ENCODE measurements at regions of chr14 and their contacts with region 1.

Region 1: GRCh38 chr14:89178802-89179535 is 238.1 kb downstream of the FOXN3 start:
- DNase-seq: no peak
- ATAC-seq: no peak
- H3K4me3 ChIP-seq: no peak overlapping the region
- H3K4me3 Mint-ChIP-seq: no peak overlapping the region
- H3K27ac ChIP-seq: no peak overlapping the region
- H3K27ac Mint-ChIP-seq: peak overlapping the region in 6 of 9 donors; percentile 10 to 66 (median 26)
- H3K4me1 ChIP-seq: peaks cover 0 to 4% of the 10 kb centered on the region in 2 donors
- H3K4me1 Mint-ChIP-seq: peaks cover 5 to 44% (median 29%) of the 10 kb centered on the region in 7 donors
- H3K27me3 ChIP-seq: no peaks in the 10 kb centered on the region
- H3K27me3 Mint-ChIP-seq: no peaks in the 10 kb centered on the region

Region 2: GRCh38 chr14:89040460-89041259 is 138.3 kb before region 1 on chr14:
- CTCF ChIA-PET with region 1: no interaction called
- POLR2A ChIA-PET with region 1: no interaction called
- intact Hi-C with region 1: loop called in 1 of 2 experiments (anchors 1 kb)
- DNase-seq: peak; percentile 54 to 84 (median 71)
- ATAC-seq: peak; percentile 88
- H3K4me3 ChIP-seq: peak overlapping the region; percentile 48
- H3K4me3 Mint-ChIP-seq: peak overlapping the region; percentile 59 to 89 (median 74)
- H3K27ac ChIP-seq: no peak overlapping the region
- H3K27ac Mint-ChIP-seq: no peak overlapping the region
- H3K4me1 ChIP-seq: peaks cover 6 to 10% of the 10 kb centered on the region in 2 donors
- H3K4me1 Mint-ChIP-seq: peaks cover 0 to 16% (median 13%) of the 10 kb centered on the region in 7 donors
- H3K27me3 ChIP-seq: peaks cover 0 to 3% of the 10 kb centered on the region in 2 donors
- H3K27me3 Mint-ChIP-seq: peaks cover 23 to 36% (median 27%) of the 10 kb centered on the region in 5 donors

Region 3: DNA sequence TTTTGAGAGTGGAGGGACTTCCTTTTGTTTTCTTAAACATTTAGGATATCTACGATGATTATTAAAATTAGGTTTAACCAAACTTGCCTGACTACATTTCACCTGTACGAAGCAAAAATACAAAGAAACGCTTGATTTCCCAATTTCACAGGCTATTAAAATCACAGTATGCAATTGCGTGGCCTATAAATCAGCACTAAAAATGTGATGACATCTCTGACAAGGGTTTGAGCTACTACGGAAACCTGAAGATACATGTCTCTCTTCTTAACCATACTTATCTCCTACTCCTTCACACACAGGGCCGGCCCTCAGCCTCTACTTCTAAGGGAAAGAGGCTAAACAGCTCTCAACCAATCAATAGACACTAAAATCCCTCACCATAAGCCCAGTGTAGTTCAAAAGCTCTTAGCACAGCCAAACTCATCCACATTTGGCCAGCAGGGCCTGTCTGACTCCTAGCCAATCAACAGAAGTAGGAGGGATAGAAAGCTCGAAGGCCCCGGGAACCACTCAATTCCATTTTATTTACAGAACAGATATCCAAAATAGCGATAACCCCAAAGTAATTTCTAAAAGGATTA is 100.8 kb after region 1 on chr14:
- CTCF ChIA-PET with region 1: no interaction called
- POLR2A ChIA-PET with region 1: no interaction called
- intact Hi-C with region 1: no loop called
- DNase-seq: peak in 1 of 9 donors; percentile 11
- ATAC-seq: no peak
- H3K4me3 ChIP-seq: no peak overlapping the region
- H3K4me3 Mint-ChIP-seq: no peak overlapping the region
- H3K27ac ChIP-seq: no peak overlapping the region
- H3K27ac Mint-ChIP-seq: peak overlapping the region in 2 of 9 donors; percentile 48 to 57
- H3K4me1 ChIP-seq: peaks cover 8 to 25% of the 10 kb centered on the region in 2 donors
- H3K4me1 Mint-ChIP-seq: peaks cover 45 to 90% (median 79%) of the 10 kb centered on the region in 7 donors
- H3K27me3 ChIP-seq: no peaks in the 10 kb centered on the region
- H3K27me3 Mint-ChIP-seq: no peaks in the 10 kb centered on the region

Region 4: DNA sequence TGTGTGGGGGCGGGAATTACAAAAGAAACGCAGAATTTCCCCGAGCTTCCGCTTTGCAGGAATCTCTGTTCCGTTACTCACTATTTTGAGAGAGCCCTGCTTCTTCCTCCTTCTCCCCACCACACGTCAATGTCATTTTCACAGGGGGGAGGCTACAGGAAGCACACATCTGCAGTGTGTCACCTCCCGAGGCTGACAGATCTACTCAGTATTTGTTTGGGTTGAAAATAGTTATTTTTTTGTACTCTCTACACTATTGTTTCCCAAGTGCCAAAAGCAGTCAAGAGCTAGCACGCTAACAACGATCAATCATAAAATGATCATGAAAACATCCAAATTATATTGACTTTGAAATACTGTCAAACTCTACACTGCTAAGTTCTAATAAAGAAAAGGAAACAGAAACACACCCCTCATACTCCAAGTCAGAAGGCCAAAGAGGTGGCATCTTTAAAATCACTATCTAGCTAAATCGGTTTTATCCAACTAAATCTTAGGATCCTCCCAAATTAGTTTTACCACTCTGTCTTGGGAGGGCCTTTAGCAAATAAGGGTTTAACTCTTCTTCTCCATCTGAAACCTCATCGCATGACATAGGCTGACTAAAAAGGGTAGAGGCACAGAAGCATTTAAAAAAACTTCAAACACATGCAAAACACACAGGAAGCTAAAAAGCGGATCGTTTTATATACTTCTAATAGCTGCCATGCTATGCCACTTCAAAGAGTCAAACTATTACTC is 186.3 kb after region 1 on chr14:
- CTCF ChIA-PET with region 1: interaction called, 3 read pairs
- POLR2A ChIA-PET with region 1: no interaction called
- intact Hi-C with region 1: loop called in 1 of 2 experiments (anchors 1 kb)
- DNase-seq: peak in 8 of 9 donors; percentile 39 to 82 (median 66)
- ATAC-seq: peak; percentile 96
- H3K4me3 ChIP-seq: peak overlapping the region; percentile 20
- H3K4me3 Mint-ChIP-seq: peak overlapping the region; percentile 79 to 91 (median 86)
- H3K27ac ChIP-seq: peak overlapping the region; percentile 77
- H3K27ac Mint-ChIP-seq: peak overlapping the region; percentile 84 to 97 (median 92)
- H3K4me1 ChIP-seq: peaks cover 18 to 26% of the 10 kb centered on the region in 2 donors
- H3K4me1 Mint-ChIP-seq: peaks cover 38 to 73% (median 63%) of the 10 kb centered on the region in 7 donors
- H3K27me3 ChIP-seq: no peaks in the 10 kb centered on the region
- H3K27me3 Mint-ChIP-seq: no peaks in the 10 kb centered on the region

Region 5: DNA sequence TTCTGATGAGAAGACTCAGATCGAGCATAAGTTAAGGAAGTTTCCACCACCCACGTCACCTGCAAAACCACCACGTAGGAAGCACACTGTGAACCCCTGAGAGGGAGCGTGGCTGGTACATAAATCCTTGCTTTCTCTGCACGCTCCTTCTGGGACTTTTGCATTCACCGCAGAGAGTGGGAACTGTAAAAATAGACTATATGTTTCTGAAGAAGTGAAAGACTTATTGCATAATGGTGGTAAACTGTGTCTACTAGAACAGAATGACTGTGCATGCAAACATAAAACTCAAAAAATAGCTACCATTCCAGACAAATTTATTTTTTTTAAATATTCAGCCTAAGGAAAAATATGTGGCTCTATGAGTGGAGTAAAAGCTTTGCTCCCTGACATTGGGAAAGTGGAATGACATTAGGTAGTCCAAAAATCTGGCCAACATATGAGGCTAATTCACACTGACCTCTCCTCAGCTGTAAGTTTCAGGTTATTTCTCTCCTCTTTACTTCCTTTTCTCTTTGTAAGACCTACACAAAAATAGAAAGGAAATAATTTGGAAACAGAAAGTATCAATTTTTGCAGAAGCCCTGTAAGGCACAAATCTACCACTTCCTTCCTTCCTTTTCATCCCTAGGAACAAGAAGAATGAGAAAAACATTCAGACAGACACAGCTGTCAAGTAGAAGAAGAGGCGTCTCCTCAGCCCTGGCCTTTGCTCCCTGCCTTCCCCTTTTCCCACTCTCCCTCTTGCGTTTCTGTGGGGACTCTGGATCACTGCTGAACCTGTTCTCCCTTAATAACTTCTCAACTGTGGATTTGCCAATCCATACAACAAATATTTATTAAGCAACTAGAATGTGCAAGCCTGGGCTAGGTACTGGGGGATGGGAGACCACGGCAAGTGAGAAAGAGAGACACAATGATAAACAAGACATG is 502.4 kb after region 1 on chr14:
- CTCF ChIA-PET with region 1: no interaction called
- POLR2A ChIA-PET with region 1: no interaction called
- intact Hi-C with region 1: loop called in 1 of 2 experiments (anchors 1 kb)
- DNase-seq: peak in 8 of 9 donors; percentile 35 to 66 (median 55)
- ATAC-seq: peak; percentile 70
- H3K4me3 ChIP-seq: peak overlapping the region; percentile 53
- H3K4me3 Mint-ChIP-seq: peak overlapping the region; percentile 77 to 92 (median 82)
- H3K27ac ChIP-seq: peak overlapping the region; percentile 54
- H3K27ac Mint-ChIP-seq: peak overlapping the region; percentile 92 to 98 (median 95)
- H3K4me1 ChIP-seq: peaks cover 25 to 42% of the 10 kb centered on the region in 2 donors
- H3K4me1 Mint-ChIP-seq: peaks cover 25 to 64% (median 55%) of the 10 kb centered on the region in 7 donors
- H3K27me3 ChIP-seq: no peaks in the 10 kb centered on the region
- H3K27me3 Mint-ChIP-seq: no peaks in the 10 kb centered on the region

Region 6: GRCh38 chr14:89899917-89900663 is 721.1 kb after region 1 on chr14:
- CTCF ChIA-PET with region 1: no interaction called
- POLR2A ChIA-PET with region 1: no interaction called
- intact Hi-C with region 1: loop called in 1 of 2 experiments (anchors 1 kb)
- DNase-seq: peak in 4 of 9 donors; percentile 10 to 34 (median 20)
- ATAC-seq: no peak
- H3K4me3 ChIP-seq: no peak overlapping the region
- H3K4me3 Mint-ChIP-seq: no peak overlapping the region
- H3K27ac ChIP-seq: no peak overlapping the region
- H3K27ac Mint-ChIP-seq: no peak overlapping the region
- H3K4me1 ChIP-seq: peaks cover 0 to 13% of the 10 kb centered on the region in 2 donors
- H3K4me1 Mint-ChIP-seq: peaks cover 8 to 16% (median 15%) of the 10 kb centered on the region in 7 donors
- H3K27me3 ChIP-seq: no peaks in the 10 kb centered on the region
- H3K27me3 Mint-ChIP-seq: peaks cover 0 to 13% (median 7%) of the 10 kb centered on the region in 5 donors

Region 7: DNA sequence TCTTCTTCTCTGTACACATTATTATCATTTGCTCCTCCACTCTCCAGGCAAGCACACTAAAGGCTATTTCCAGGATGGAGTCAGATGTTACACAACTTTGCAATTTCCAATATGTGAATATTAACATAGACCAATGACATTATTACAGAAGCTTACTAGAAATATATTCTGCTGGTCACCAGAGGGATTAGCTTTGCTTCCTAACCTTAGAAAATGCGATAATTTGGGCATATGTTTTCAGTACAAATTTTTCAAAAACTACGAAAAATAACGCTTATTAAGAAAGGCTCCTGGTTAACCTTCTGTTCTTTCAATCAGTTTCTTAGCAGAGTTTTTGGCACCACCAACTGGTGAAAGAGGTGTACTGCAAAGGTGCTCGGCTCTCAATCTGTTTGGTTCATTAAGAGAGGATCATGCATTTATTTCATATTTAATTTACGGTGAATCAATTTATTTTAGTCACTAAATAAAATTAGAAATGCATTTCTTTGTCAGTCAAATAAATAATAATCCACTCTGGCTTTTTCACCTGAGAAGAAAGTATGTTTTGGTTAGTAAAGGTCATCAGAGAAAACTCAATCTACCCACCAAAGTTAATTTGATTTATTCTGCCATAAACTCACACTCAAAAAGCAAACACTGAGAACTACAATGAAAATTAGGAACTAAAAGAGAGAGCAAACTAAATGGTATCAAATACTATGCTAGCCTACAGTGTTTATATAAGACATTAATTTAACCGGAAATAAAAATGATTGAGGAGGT is 736.3 kb after region 1 on chr14:
- CTCF ChIA-PET with region 1: interaction called, 6 read pairs
- POLR2A ChIA-PET with region 1: no interaction called
- intact Hi-C with region 1: loop called (anchors 1 kb)
- DNase-seq: peak in 8 of 9 donors; percentile 22 to 65 (median 50)
- ATAC-seq: peak; percentile 65
- H3K4me3 ChIP-seq: no peak overlapping the region
- H3K4me3 Mint-ChIP-seq: no peak overlapping the region
- H3K27ac ChIP-seq: no peak overlapping the region
- H3K27ac Mint-ChIP-seq: no peak overlapping the region
- H3K4me1 ChIP-seq: peaks cover 0 to 4% of the 10 kb centered on the region in 2 donors
- H3K4me1 Mint-ChIP-seq: peaks cover 0 to 4% (median 3%) of the 10 kb centered on the region in 7 donors
- H3K27me3 ChIP-seq: no peaks in the 10 kb centered on the region
- H3K27me3 Mint-ChIP-seq: peaks cover 0 to 22% (median 11%) of the 10 kb centered on the region in 5 donors